Gastrocnemius medialis (tissue), 4 donors: ENCODE measurements at regions of chr9 and their contacts with region 1.

Region 1: DNA sequence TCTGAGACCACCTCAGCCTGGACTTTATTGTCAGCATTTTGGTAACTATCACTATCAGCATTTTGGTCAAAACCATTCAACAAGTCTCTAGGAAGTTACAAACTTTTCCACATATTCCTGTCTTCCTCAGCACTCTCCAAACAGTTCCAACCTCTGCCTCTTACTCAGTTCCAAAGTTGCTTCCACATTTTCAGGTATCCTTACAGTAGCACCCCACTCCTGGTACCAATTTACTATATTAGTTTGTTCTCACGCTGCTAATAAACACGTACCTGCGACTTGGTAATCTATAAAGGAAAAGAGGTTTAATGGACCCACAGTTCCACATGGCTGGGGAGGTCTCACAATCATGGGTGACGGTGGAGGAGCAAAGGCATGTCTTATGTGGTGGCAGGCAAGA is 551.3 kb downstream of the DMRTA1 start:
- DNase-seq: no peak
- ATAC-seq: no peak
- H3K4me3 ChIP-seq: no peak overlapping the region
- H3K27ac ChIP-seq: no peak overlapping the region
- H3K4me1 ChIP-seq: no peaks in the 10 kb centered on the region
- H3K27me3 ChIP-seq: no peaks in the 10 kb centered on the region
- CTCF ChIP-seq: no peak
- POLR2A ChIP-seq: no peak

Region 2: DNA sequence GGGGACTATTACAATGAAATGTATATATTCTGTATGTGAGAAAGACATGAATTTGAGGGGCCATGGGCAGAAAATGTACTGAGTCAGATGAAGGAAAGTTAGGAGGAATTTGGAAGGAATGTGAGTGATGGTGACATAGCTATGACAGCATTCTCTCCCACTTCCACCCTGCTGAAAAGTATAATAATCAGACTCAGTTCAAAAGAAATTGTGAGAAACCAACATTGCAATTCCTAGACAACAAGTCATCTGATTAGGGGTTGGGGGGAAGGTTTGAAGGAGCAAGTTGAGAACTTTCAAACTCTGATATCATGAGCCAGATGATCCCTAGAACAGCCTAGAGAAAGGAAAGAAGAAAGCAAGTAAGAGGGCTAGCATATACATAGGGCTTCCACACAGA is 180.7 kb before region 1 on chr9:
- in situ Hi-C with region 1: no loop called
- intact Hi-C with region 1: no loop called
- DNase-seq: no peak
- ATAC-seq: no peak
- H3K4me3 ChIP-seq: no peak overlapping the region
- H3K27ac ChIP-seq: no peak overlapping the region
- H3K4me1 ChIP-seq: no peaks in the 10 kb centered on the region
- H3K27me3 ChIP-seq: no peaks in the 10 kb centered on the region
- CTCF ChIP-seq: no peak
- POLR2A ChIP-seq: no peak

Region 3: DNA sequence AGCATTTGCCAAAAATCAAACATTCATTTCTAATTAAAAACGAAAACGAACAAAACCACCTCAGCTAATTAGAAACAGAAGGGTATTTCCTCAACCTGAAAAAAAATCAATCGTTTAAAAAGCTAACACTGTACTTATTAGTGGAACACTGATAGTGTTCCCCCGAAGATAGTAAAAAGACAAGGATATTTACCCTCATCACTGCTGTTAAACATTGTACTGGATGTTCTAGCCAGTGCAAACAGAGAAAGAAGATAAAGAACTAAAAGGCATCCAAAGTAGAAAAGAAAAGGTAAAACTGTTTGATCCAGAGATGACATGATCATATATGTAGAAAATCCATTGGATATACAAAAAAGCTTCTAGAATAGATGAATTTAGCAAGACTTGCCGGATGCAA is 43.0 kb before region 1 on chr9:
- in situ Hi-C with region 1: no loop called
- intact Hi-C with region 1: loop called (anchors 5 kb)
- DNase-seq: no peak
- ATAC-seq: no peak
- H3K4me3 ChIP-seq: no peak overlapping the region
- H3K27ac ChIP-seq: no peak overlapping the region
- H3K4me1 ChIP-seq: no peaks in the 10 kb centered on the region
- H3K27me3 ChIP-seq: no peaks in the 10 kb centered on the region
- CTCF ChIP-seq: no peak
- POLR2A ChIP-seq: no peak

Region 4: DNA sequence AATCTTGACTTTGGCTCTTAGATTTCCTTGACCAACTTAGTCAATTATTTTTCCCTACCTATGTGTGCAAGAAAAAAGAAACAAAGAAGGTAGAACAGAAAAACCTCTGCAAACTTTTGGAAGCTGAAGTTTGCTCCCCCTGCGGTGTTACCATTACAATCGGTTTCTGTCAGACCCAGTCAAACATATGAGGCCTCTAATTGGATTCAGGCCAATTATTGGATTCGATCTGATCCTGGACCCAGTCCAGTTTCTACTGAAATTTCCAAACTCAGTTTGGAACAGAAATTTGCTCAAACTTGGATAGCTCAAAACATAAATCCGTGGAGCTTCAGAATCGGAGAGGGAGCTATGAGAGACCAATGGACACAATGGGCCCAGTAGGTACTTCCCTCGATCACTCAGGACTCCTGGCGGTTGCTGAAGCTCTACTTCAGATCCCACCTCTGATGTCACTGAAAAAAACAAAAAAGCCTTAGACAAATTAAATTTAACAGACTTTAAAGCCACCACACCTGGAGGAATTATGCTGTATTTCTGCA is 27.4 kb before region 1 on chr9:
- in situ Hi-C with region 1: no loop called
- intact Hi-C with region 1: no loop called
- DNase-seq: no peak
- ATAC-seq: no peak
- H3K4me3 ChIP-seq: no peak overlapping the region
- H3K27ac ChIP-seq: no peak overlapping the region
- H3K4me1 ChIP-seq: no peaks in the 10 kb centered on the region
- H3K27me3 ChIP-seq: no peaks in the 10 kb centered on the region
- CTCF ChIP-seq: no peak
- POLR2A ChIP-seq: no peak

Region 5: DNA sequence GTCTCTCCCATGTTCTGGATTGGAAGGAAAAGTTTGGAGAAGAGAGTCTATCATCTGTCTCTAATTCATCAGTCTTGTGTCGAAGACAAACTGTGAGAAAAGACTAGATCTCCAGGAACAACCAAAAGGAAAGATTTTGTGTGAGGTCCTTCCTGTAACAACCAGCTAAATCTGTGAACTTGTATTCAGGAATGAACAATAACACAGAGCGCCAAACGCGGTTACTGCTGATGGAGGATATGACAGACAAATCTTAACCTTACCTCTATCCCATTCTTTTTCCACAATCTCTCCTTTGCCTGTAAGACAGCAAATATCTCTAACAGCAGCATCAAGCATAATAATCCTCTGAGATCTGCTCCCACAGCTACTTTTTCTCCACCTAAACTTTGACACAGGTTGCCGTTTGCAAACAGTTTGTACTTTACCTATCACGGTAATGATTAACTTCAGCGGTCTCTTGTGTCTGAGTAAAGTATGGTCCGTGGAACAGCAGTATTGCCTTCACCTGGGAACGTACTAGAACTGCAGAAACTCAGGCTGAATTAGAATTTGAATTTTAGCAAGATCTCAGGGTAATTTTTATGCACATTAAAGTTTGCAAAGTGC is 440.5 kb after region 1 on chr9:
- in situ Hi-C with region 1: no loop called
- intact Hi-C with region 1: no loop called
- DNase-seq: no peak
- ATAC-seq: no peak
- H3K4me3 ChIP-seq: no peak overlapping the region
- H3K27ac ChIP-seq: no peak overlapping the region
- H3K4me1 ChIP-seq: no peaks in the 10 kb centered on the region
- H3K27me3 ChIP-seq: no peaks in the 10 kb centered on the region
- CTCF ChIP-seq: no peak
- POLR2A ChIP-seq: no peak